Activated CD4-positive, alpha-beta memory T cell treated with anti-CD3 and anti-CD28 coated beads, Interleukin-2, amount 10 ng/mL, durations not matched to agents 7 days and 5 days (primary cell): ENCODE measurements at regions of chr16 and their contacts with region 1.

Region 1: DNA sequence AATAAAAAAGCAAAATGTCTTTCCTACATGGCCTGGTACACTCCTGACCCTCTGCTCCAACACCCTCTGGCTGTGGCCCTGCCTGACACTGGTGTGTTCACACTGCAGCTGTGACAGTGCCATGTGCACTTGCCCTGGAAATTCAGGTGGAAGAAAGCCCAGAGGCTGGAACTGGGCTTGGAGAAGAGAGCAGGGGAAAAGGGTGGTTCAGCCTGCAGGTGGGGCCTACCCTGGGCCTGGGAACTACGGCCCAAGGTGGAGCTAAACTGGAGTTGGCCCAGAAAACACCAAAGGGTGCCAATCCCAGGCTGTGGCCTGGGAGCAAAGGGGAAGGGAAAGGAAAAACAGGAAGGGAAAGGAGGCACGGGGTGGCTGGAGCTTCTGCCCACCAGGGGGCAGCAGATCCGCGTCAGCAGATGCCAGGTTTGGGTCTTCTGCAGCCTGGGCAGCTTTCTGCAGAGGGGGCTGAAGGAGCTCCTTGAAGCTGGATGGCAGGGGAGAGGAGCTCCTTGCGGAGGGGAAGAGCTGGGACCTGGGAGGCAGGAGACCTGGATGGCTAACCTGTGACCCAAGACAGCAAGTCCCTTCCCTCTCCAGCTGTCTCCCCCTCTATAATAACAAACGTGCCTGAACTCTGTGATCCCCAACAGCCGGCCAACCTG is 15.4 kb upstream of the CTCF start:
- DNase-seq: peak; percentile 81
- H3K4me3 Mint-ChIP-seq: peak overlapping the region; percentile 37
- H3K27ac Mint-ChIP-seq: peak overlapping the region; percentile 96
- H3K4me1 Mint-ChIP-seq: peaks cover 47% of the 10 kb centered on the region
- H3K27me3 Mint-ChIP-seq: no peaks in the 10 kb centered on the region

Region 2: DNA sequence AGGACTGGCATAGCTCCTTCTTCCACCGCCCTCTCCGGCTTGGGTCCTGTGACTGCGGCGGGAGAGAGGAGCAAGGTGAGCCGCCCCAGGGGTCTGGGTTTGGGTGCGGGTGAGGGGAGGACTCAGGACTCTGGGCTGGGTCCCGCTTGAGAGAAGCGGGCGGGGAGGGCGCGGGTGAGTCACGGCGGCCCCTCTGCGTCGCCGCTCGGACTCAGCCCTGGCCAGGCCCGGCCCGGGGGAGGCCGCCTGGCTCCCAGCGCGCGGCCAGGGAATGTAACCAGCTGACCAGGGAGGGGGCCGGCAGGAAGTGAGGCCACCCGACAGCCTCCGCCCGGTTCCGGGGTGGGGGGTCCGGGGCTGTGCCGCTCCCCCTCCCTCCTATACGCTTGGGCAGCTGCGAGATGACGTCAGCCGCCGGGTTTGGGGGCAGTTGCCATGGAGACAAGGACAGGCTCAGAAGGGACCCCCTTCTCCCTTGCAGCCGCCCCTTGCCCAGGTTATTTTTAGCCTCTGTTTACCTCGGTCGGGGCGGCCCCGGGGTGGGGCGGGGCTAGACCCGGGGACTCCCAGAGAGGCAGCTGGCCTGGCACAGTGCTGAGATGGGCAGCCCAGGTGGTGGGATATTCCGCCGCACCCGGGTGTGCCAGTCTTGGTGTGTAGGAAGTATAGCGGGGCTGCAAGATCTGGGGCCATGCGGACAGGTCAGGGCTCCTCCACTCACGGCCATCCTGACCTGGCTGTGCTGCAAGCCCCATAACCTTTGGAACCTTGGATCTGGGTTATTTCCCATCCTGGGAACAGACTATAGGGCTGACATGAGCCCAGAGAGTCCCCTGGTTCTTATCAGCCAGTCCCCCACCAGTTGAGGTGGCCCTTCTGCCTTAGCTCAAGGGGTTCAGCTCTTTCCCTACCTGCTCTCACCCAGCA is 16.6 kb before region 1 on chr16:
- CTCF ChIA-PET with region 1: interaction called, 10 read pairs
- POLR2A ChIA-PET with region 1: interaction called, 5 read pairs
- DNase-seq: no peak
- H3K4me3 Mint-ChIP-seq: peak overlapping the region; percentile 56
- H3K27ac Mint-ChIP-seq: no peak overlapping the region
- H3K4me1 Mint-ChIP-seq: peaks cover 16% of the 10 kb centered on the region
- H3K27me3 Mint-ChIP-seq: peaks cover 50% of the 10 kb centered on the region

Region 3: GRCh38 chr16:67561824-67562525 is 15.1 kb after region 1 on chr16:
- CTCF ChIA-PET with region 1: interaction called, 334 read pairs
- POLR2A ChIA-PET with region 1: interaction called, 277 read pairs
- DNase-seq: peak; percentile 99
- H3K4me3 Mint-ChIP-seq: peak overlapping the region; percentile 86
- H3K27ac Mint-ChIP-seq: peak overlapping the region; percentile 92
- H3K4me1 Mint-ChIP-seq: peaks cover 43% of the 10 kb centered on the region
- H3K27me3 Mint-ChIP-seq: no peaks in the 10 kb centered on the region

Region 4: DNA sequence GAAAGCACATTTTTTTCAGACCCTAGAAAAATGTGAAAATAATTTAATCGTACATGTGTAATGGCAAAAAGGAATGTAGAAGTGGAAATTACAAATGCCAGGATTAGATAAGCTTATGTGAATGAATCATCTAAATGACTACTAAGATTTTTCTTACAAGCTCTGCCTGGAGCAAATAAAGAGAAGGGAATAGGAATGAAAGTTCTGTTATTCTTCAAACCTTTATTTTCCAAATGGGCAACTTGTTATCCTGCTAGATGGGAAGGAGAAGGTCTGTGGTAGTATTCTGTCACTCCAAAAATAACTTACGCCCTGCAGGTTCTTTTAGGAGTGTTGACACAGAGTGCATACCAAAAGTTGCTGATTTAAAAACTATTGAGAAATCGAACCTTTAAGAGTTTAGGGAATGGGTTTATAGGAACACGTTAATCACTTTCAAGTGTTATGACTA is 25.1 kb after region 1 on chr16:
- CTCF ChIA-PET with region 1: interaction called, 21 read pairs
- POLR2A ChIA-PET with region 1: no interaction called
- DNase-seq: no peak
- H3K4me3 Mint-ChIP-seq: no peak overlapping the region
- H3K27ac Mint-ChIP-seq: no peak overlapping the region
- H3K4me1 Mint-ChIP-seq: peaks cover 13% of the 10 kb centered on the region
- H3K27me3 Mint-ChIP-seq: no peaks in the 10 kb centered on the region

Region 5: GRCh38 chr16:67595033-67595355 is 48.1 kb after region 1 on chr16:
- CTCF ChIA-PET with region 1: interaction called, 14 read pairs
- POLR2A ChIA-PET with region 1: interaction called, 4 read pairs
- DNase-seq: no peak
- H3K4me3 Mint-ChIP-seq: no peak overlapping the region
- H3K27ac Mint-ChIP-seq: peak overlapping the region; percentile 27
- H3K4me1 Mint-ChIP-seq: peaks cover 34% of the 10 kb centered on the region
- H3K27me3 Mint-ChIP-seq: no peaks in the 10 kb centered on the region

Region 6: DNA sequence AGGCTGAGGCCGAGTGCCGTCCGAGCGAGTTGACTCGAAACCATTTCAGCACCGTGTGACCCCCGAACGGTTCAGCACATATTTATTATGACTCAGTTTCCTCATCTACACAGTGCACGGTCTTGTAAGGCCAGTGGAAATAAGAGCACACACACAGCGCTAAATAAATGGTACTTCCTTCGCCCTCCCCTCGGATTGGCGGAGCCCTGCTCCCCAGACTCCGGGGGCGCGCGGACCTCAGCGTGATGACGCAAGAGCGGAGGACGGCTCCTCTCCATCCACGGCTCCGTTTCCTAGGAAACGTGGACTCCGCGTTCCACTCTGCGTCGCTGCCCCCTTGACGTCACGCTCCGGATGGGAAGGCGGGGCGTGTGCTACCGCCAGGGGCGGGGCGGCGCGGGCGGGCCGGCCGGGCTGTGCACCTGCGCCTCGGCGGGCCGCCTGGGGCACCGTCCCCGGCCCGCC is 113.7 kb after region 1 on chr16 and contains the start of gene PARD6A:
- CTCF ChIA-PET with region 1: interaction called, 53 read pairs
- POLR2A ChIA-PET with region 1: interaction called, 16 read pairs
- DNase-seq: peak; percentile 97
- H3K4me3 Mint-ChIP-seq: peak within 1 kb of the TSS; percentile 89
- H3K27ac Mint-ChIP-seq: peak within 1 kb of the TSS; percentile 96
- H3K4me1 Mint-ChIP-seq: peaks cover 35% of the 10 kb centered on the region
- H3K27me3 Mint-ChIP-seq: no peaks in the 10 kb centered on the region
- total RNA-seq, gene PARD6A: 12.2 to 14.0 TPM

Region 7: DNA sequence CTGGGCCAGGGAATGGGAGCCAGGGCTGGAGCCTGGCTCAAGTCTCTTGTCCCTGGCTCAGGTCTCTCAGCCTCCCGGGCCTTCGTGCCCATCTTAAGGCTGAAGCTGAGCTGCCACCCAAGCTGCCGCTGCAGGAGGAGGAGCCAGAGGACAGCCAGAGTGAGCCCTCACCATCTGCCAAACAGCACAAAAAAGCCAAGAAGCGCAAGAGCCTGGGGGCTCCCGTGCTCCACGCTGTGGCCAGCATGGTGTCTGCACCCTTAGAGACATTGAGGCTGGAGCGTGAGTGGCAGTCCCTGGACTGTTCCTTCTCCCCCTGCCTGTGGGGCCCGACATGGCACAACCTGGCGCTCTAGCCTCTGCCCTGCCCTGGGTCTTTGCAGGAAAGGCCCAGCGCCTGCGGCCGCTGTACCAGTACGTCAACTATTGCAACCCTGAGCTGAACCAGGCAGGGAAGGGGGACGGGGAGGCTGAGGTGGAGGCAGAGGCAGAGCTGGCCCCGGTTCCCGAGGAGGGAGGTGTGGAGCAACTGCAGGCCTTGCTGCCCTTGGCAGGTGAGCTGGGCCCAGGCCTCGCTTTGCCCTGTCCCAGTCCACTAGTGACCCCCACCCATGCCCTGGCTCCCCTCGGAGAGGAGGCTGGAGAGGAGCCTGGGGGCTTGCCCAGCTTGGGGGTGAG is 121.1 kb after region 1 on chr16:
- CTCF ChIA-PET with region 1: interaction called, 53 read pairs
- POLR2A ChIA-PET with region 1: interaction called, 6 read pairs
- DNase-seq: peak; percentile 88
- H3K4me3 Mint-ChIP-seq: peak overlapping the region; percentile 86
- H3K27ac Mint-ChIP-seq: no peak overlapping the region
- H3K4me1 Mint-ChIP-seq: peaks cover 30% of the 10 kb centered on the region
- H3K27me3 Mint-ChIP-seq: no peaks in the 10 kb centered on the region